Motor neuron (in vitro differentiated cells): ENCODE measurements at regions of chr18 and their contacts with region 1.

Region 1: GRCh38 chr18:54671291-54671881 is 80.3 kb downstream of the DYNAP start:
- ATAC-seq: no peak
- H3K4me3 ChIP-seq: no peak overlapping the region
- H3K27ac ChIP-seq: no peak overlapping the region
- H3K4me1 ChIP-seq: peaks cover 7 to 12% of the 10 kb centered on the region in 2 donors

Region 2: GRCh38 chr18:54444319-54444914 is 227.0 kb before region 1 on chr18:
- in situ Hi-C with region 1: loop called in 1 of 9 experiments (anchors 25 kb)
- ATAC-seq: peak; percentile 41 to 93 (median 66)
- H3K4me3 ChIP-seq: no peak overlapping the region
- H3K27ac ChIP-seq: no peak overlapping the region
- H3K4me1 ChIP-seq: no peaks in the 10 kb centered on the region

Region 3: GRCh38 chr18:54466248-54467005 is 205.0 kb before region 1 on chr18:
- in situ Hi-C with region 1: loop called in 1 of 9 experiments (anchors 25 kb)
- ATAC-seq: no peak
- H3K4me3 ChIP-seq: no peak overlapping the region
- H3K27ac ChIP-seq: no peak overlapping the region
- H3K4me1 ChIP-seq: no peaks in the 10 kb centered on the region

Region 4: GRCh38 chr18:54558609-54559585 is 112.5 kb before region 1 on chr18:
- in situ Hi-C with region 1: loop called in 1 of 9 experiments (anchors 25 kb)
- ATAC-seq: peak in 1 of 8 experiments; percentile 28
- H3K4me3 ChIP-seq: no peak overlapping the region
- H3K27ac ChIP-seq: no peak overlapping the region
- H3K4me1 ChIP-seq: peaks cover 0 to 3% of the 10 kb centered on the region in 2 donors